Heart left ventricle (tissue), 16 donors: ENCODE measurements at regions of chr12 and their contacts with region 1.

Region 1: DNA sequence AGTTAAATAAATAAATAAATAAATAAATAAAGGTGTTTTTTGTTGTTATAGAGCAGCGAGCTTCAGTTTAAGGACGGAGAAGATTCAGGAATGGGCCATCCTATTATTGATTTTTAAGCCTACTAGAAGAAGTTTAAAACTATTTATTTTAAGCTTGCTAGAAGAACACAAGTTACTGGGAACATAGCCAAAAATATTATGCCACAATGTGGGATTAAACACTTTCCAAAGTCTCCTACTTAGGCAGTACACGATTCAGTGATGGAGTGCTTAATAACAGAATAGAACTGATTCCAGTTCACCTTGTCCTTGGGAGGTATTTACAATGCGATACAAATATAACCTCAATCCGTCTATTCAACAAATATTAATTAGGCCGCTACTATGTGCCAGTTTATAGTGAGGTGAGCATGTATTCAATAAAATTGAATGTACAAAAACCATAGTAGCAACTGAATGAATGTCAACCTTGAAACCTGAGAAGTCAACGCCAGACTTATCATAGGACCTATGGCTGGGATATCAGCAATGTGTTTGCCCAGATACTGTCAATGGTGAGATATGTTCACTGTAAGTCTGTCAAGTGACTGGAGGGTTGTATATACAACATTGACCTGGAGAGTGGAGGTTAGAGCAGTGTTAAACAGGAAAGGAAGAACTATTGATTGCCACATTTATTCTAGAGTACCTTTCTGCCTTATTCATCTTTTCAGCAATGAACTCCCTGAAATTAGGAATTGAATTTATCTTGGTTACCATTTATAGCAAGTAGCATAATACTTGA is 486.4 kb downstream of the TMTC2 start:
- DNase-seq: no peak
- ATAC-seq: no peak
- H3K4me3 ChIP-seq: no peak overlapping the region
- H3K27ac ChIP-seq: no peak overlapping the region
- H3K4me1 ChIP-seq: peaks cover 0 to 16% (median 0%) of the 10 kb centered on the region in 12 donors
- H3K27me3 ChIP-seq: no peaks in the 10 kb centered on the region
- CTCF ChIP-seq: no peak
- POLR2A ChIP-seq: no peak

Region 2: GRCh38 chr12:82870771-82871377 is 302.2 kb before region 1 on chr12:
- intact Hi-C with region 1: no loop called
- DNase-seq: no peak
- ATAC-seq: no peak
- H3K4me3 ChIP-seq: no peak overlapping the region
- H3K27ac ChIP-seq: no peak overlapping the region
- H3K4me1 ChIP-seq: peaks cover 0 to 11% (median 0%) of the 10 kb centered on the region in 12 donors
- H3K27me3 ChIP-seq: no peaks in the 10 kb centered on the region
- CTCF ChIP-seq: no peak
- POLR2A ChIP-seq: no peak

Region 3: GRCh38 chr12:83106855-83107254 is 66.2 kb before region 1 on chr12:
- intact Hi-C with region 1: no loop called
- DNase-seq: no peak
- ATAC-seq: no peak
- H3K4me3 ChIP-seq: no peak overlapping the region
- H3K27ac ChIP-seq: no peak overlapping the region
- H3K4me1 ChIP-seq: peaks cover 0 to 9% (median 0%) of the 10 kb centered on the region in 12 donors
- H3K27me3 ChIP-seq: no peaks in the 10 kb centered on the region
- CTCF ChIP-seq: no peak
- POLR2A ChIP-seq: no peak

Region 4: GRCh38 chr12:83161456-83161855 is 11.6 kb before region 1 on chr12:
- intact Hi-C with region 1: loop called in 1 of 10 experiments (anchors 2 kb)
- DNase-seq: no peak
- ATAC-seq: no peak
- H3K4me3 ChIP-seq: no peak overlapping the region
- H3K27ac ChIP-seq: no peak overlapping the region
- H3K4me1 ChIP-seq: no peaks in the 10 kb centered on the region
- H3K27me3 ChIP-seq: no peaks in the 10 kb centered on the region
- CTCF ChIP-seq: no peak
- POLR2A ChIP-seq: no peak

Region 5: GRCh38 chr12:83210933-83211332 is 37.9 kb after region 1 on chr12:
- intact Hi-C with region 1: no loop called
- DNase-seq: no peak
- ATAC-seq: no peak
- H3K4me3 ChIP-seq: no peak overlapping the region
- H3K27ac ChIP-seq: no peak overlapping the region
- H3K4me1 ChIP-seq: no peaks in the 10 kb centered on the region
- H3K27me3 ChIP-seq: no peaks in the 10 kb centered on the region
- CTCF ChIP-seq: no peak
- POLR2A ChIP-seq: no peak

Region 6: DNA sequence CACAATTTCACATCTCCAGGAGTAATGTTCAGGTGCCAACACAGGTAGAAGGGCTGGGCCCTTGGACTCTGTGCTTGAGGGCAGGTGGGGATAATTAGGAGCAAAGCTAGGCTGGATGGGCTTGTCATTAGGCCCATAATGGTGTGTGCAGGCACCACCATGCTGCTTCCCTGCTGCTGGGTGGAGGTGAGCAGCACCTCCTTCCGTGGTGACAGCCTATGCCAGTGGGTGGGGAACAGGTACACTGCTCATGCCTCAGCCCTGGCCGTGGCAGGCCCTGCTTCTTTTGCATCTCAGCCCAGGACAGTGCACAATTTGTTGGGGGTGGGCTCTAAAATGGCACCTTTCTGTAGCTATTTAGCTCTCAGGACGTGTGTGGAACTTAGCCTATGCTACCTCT is 469.1 kb after region 1 on chr12:
- intact Hi-C with region 1: no loop called
- DNase-seq: no peak
- ATAC-seq: peak in 1 of 4 donors; percentile 11
- H3K4me3 ChIP-seq: no peak overlapping the region
- H3K27ac ChIP-seq: no peak overlapping the region
- H3K4me1 ChIP-seq: no peaks in the 10 kb centered on the region
- H3K27me3 ChIP-seq: no peaks in the 10 kb centered on the region
- CTCF ChIP-seq: no peak
- POLR2A ChIP-seq: no peak